ENCODE measurements at regions of chr10 and their contacts with region 1.

Region 1: DNA sequence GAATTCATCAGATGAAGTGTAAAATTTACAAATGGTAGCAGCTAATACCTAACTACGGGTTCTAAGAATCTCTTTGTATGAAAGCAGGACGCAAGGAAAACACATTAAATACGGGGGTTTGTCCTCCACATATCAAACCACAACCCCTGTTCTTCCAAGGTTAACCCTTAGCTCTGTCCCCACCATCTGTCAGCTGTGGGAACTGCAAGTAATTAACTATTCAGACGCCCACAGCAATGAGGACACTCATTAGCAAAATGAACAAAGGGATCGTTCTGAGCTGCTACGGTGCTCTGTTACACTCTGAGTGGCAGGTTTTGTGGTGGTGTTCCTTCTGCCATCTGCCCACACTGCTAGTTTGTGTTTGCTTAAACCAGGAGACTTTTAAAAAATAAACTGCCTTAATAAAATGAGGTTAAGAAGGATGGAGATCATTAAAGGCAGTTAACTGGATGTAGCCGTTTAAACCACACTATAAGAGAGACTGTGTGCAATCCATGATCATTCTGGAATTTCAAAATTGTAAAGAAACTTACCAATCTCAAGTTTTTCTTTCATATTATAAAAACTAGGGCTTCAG is 51.4 kb downstream of the C10orf67 start:
- DNase-seq: no peak
- H3K4me3 ChIP-seq: no peak overlapping the region
- H3K27ac ChIP-seq: no peak overlapping the region
- H3K27me3 ChIP-seq: peaks cover 8% of the 10 kb centered on the region
- CTCF ChIP-seq: peak; percentile 61

Region 2: DNA sequence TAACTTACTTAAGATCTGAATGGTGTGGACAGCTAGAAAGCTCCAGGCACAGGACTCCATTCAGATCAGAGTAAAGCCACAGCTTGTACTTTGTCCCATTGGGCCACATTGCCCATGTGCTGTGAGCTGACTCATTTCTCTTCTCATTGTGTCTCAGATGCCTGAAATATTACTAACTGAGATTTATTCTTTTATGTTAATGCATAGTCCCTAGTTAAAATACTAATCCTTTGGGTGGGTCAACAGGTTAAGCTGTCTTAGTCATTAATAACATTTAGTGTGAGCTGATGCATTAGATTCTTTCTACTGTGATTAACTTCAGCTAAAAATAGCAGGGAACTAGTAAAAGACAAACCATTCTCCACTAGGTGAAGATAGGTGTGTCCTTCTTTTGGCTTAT is 470.1 kb before region 1 on chr10:
- CTCF ChIA-PET with region 1: no interaction called
- POLR2A ChIA-PET with region 1: no interaction called
- DNase-seq: no peak
- H3K4me3 ChIP-seq: no peak overlapping the region
- H3K27ac ChIP-seq: no peak overlapping the region
- H3K27me3 ChIP-seq: no peaks in the 10 kb centered on the region
- CTCF ChIP-seq: no peak

Region 3: DNA sequence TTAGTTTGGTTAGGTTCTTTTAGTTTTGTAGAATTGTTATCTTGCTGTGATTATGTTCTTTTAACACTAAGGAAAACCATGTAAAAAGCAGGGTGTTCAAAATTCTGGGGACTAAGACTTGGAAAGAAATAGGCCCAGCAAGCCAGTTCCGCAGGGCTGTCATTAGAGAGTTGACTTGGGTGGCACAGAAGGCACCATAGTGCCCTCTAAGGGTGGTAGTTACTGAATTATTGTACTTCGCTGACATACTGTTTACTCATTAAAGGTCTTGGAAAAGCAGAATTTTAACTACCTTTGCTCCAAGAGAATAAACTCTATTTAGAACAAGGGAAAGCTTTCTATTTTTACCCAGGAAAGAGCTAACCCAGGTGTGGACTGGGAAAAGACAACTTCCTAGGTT is 232.2 kb after region 1 on chr10:
- CTCF ChIA-PET with region 1: interaction called, 104 read pairs
- POLR2A ChIA-PET with region 1: no interaction called
- DNase-seq: no peak
- H3K4me3 ChIP-seq: no peak overlapping the region
- H3K27ac ChIP-seq: no peak overlapping the region
- H3K27me3 ChIP-seq: no peaks in the 10 kb centered on the region
- CTCF ChIP-seq: peak; percentile 38